ENCODE measurements at regions of chr6 and their contacts with region 1.

Region 1: GRCh38 chr6:28136585-28137504 is 4.8 kb upstream of the ZKSCAN8 start:
- DNase-seq: peak; percentile 88 to 97 (median 96)
- H3K4me3 ChIP-seq: peak overlapping the region; percentile 54 to 90 (median 72)
- H3K27ac ChIP-seq: peak overlapping the region; percentile 89 to 96 (median 95)
- H3K4me1 ChIP-seq: peaks cover 5 to 31% of the 10 kb centered on the region in 2 donors
- H3K27me3 ChIP-seq: no peaks in the 10 kb centered on the region
- CTCF ChIP-seq: no peak
- POLR2A ChIP-seq: peak; percentile 50 to 67

Region 2: DNA sequence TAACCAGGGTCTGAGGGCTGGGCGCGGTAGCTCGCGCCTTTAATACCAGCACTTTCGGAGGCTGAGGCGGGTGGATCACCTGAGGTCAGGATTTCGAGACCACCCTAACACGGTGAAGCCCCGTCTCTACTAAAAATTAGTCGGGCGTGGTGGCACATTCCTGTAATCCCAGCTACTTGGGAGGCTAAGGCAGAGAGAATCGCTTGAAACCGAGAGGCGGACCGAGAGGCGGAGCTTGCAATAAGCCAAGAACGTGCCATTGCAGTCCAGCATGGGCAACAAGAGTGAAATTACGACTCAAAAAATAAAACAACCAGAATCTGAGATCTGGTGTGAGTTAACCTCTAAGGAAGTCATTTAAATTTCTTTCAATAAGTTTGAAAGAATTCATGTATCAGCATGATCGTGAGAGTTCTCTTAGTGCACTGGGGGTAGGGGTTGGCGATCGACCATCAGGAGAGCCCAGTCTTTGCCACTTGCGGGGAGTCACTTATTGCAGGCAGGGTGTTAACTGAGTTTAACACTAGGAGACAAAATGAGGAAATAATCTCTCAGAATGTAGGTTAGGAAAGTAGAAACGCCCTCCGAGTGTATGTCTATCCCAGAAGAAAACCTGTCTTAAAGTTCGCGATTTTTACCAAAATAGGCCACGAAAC is 457.4 kb before region 1 on chr6:
- intact Hi-C with region 1: no loop called
- DNase-seq: no peak
- H3K4me3 ChIP-seq: no peak overlapping the region
- H3K27ac ChIP-seq: no peak overlapping the region
- H3K4me1 ChIP-seq: no peaks in the 10 kb centered on the region
- H3K27me3 ChIP-seq: peaks cover 71% of the 10 kb centered on the region
- CTCF ChIP-seq: no peak
- POLR2A ChIP-seq: no peak

Region 3: DNA sequence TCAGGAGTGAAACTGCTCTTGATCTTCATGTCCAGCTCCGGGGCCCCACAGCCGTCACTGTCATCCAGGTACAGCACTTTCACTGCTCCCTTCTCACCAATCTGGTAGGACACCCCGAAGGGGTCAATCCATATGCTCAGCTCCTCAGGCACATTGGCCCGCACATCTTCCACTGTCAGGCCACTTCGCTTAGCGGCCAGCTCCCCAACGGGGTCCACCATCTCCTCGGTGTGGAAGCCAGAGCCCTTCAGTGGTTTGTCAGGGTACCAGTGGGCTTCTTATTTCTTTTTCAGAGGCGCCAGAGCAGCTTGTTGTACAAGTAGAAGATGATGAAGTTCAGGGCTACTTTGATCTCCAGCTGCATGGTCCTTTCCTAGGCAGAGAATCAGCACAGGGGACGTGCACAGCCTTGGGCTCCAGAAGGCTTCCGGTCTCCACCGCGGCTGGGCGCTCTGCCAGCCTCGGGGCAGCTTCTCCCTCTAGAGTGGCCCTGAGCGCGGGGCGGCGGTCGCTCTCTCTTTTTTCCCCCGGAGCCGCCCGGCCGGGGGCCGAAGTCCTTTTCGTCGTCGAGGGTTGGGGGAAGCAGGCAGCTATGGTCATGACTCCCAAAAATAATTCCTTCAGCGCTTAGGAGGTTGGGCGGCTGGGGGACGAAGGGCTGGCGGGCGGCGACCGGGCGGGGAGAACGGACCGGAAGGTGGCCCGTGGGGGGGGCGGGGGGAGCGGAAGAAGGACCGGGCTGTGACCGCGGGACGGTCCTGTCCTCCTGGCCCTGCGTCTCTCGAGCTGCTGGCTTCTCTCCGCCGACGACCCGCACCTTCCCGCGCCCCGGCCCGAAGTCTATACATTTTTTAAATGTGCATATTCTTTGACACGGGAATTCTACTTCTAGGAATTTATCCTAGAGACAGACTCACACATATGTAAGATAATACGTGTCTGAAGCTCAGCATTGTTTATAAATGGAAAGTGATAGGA is 81.7 kb after region 1 on chr6:
- intact Hi-C with region 1: loop called in 1 of 2 experiments (anchors 10 kb)
- DNase-seq: peak; percentile 78 to 87 (median 85)
- H3K4me3 ChIP-seq: peak overlapping the region in 3 of 4 donors; percentile 60 to 87 (median 75)
- H3K27ac ChIP-seq: peak overlapping the region in 3 of 5 donors; percentile 63 to 88 (median 66)
- H3K4me1 ChIP-seq: peaks cover 4 to 8% of the 10 kb centered on the region in 2 donors
- H3K27me3 ChIP-seq: peaks cover 12% of the 10 kb centered on the region
- CTCF ChIP-seq: no peak
- POLR2A ChIP-seq: no peak

Measured in adrenal gland (tissue), 19 donors.